Naive thymus-derived CD4-positive, alpha-beta T cell (primary cell): ENCODE measurements at regions of chr7 and their contacts with region 1.

Region 1: DNA sequence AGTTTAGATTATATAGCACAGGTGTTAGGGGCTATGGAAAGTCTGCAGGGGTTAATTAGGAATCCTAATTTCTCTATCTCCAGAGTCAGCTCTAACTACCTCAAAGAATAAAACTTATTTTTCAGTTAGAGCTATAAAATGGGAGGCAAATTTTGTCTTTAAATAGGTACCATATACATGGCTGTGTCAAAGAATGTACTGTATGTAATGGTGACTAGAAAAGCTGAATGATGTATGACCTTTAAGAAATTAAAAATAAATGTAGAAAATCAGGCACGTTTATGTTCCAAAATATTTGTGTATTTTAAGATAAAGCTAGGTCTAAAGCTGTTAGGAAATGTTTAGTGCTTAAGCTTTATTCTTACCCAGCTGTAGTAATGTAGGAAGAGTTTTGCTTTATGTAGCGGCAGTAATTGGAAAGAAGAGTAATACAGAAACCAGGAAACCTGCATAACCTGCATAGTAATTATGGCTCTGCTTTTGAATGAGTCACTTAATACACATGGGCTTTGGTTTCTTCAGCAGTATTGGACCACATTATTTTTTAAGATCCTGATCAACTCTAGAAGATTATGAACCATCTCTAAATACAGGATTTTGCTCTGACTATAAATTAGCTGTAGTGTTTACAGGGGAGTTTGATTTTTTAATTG is 85.0 kb downstream of the KMT2E start:
- DNase-seq: no peak
- ATAC-seq: no peak
- H3K4me3 ChIP-seq: no peak overlapping the region
- H3K4me3 Mint-ChIP-seq: peak overlapping the region in 1 of 10 donors; percentile 7
- H3K27ac ChIP-seq: no peak overlapping the region
- H3K27ac Mint-ChIP-seq: peak overlapping the region in 8 of 9 donors; percentile 37 to 87 (median 73)
- H3K4me1 ChIP-seq: peaks cover 0 to 3% of the 10 kb centered on the region in 2 donors
- H3K4me1 Mint-ChIP-seq: peaks cover 5 to 56% (median 39%) of the 10 kb centered on the region in 7 donors
- H3K27me3 ChIP-seq: no peaks in the 10 kb centered on the region
- H3K27me3 Mint-ChIP-seq: no peaks in the 10 kb centered on the region

Region 2: DNA sequence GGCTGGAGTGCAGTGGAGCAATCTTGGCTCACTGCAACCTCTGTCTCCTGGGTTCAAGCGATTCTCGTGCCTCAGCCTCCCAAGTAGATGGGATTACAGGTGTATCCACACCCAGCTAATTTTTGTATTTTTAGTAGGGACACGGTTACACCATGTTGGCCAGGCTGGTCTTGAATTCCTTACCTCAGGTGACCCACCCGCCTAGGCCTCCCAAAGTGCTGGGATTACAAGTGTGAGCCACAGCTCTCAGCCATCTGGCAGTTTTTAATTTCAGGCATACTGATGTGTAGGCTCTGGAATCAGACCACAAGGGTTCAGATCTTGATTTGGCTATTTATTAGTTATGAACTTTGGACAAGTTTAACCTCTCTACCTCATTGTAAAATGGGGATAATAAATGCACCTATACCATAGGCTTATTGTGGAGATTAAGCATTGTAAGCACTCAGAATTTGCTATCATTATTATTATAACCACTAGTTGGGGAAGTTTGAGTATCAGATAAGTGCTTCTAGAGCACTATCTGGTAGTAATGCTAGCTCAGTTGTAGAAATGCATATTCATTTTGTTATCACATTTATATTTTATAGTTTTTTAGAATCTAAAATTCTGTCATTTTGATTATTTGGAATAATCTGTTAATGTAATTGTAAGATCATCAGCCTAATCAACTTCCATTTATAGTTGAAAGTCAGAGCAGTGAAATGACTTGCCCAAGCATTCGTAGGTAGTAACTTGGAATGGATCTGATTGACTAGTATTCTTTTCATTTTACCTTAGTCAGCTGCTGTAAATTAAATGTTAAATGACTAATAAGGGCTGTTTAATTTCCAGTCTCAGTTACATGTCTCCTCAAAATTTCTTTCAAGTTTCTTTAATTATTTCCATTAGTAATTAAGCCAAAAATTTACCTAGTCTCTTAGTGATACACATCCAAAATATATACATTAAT is 62.5 kb before region 1 on chr7:
- CTCF ChIA-PET with region 1: no interaction called
- POLR2A ChIA-PET with region 1: no interaction called
- intact Hi-C with region 1: no loop called
- DNase-seq: no peak
- ATAC-seq: peak; percentile 19
- H3K4me3 ChIP-seq: no peak overlapping the region
- H3K4me3 Mint-ChIP-seq: peak overlapping the region in 8 of 10 donors; percentile 6 to 74 (median 44)
- H3K27ac ChIP-seq: no peak overlapping the region
- H3K27ac Mint-ChIP-seq: peak overlapping the region in 7 of 9 donors; percentile 18 to 70 (median 41)
- H3K4me1 ChIP-seq: peaks cover 31 to 35% of the 10 kb centered on the region in 2 donors
- H3K4me1 Mint-ChIP-seq: peaks cover 29 to 77% (median 63%) of the 10 kb centered on the region in 7 donors
- H3K27me3 ChIP-seq: no peaks in the 10 kb centered on the region
- H3K27me3 Mint-ChIP-seq: no peaks in the 10 kb centered on the region

Region 3: GRCh38 chr7:105084581-105084980 is 14.4 kb before region 1 on chr7:
- CTCF ChIA-PET with region 1: no interaction called
- POLR2A ChIA-PET with region 1: no interaction called
- intact Hi-C with region 1: loop called in 1 of 2 experiments (anchors 2 kb)
- DNase-seq: no peak
- ATAC-seq: no peak
- H3K4me3 ChIP-seq: no peak overlapping the region
- H3K4me3 Mint-ChIP-seq: no peak overlapping the region
- H3K27ac ChIP-seq: no peak overlapping the region
- H3K27ac Mint-ChIP-seq: peak overlapping the region in 3 of 9 donors; percentile 42 to 52 (median 46)
- H3K4me1 ChIP-seq: no peaks in the 10 kb centered on the region
- H3K4me1 Mint-ChIP-seq: peaks cover 5 to 29% (median 20%) of the 10 kb centered on the region in 7 donors
- H3K27me3 ChIP-seq: no peaks in the 10 kb centered on the region
- H3K27me3 Mint-ChIP-seq: no peaks in the 10 kb centered on the region

Region 4: GRCh38 chr7:105118612-105119600 is 19.9 kb after region 1 on chr7:
- CTCF ChIA-PET with region 1: no interaction called
- POLR2A ChIA-PET with region 1: interaction called, 3 read pairs
- intact Hi-C with region 1: loop called in 1 of 2 experiments (anchors 2 kb)
- DNase-seq: no peak
- ATAC-seq: no peak
- H3K4me3 ChIP-seq: no peak overlapping the region
- H3K4me3 Mint-ChIP-seq: peak overlapping the region in 4 of 10 donors; percentile 23 to 39 (median 34)
- H3K27ac ChIP-seq: peak overlapping the region; percentile 40
- H3K27ac Mint-ChIP-seq: peak overlapping the region; percentile 53 to 90 (median 86)
- H3K4me1 ChIP-seq: no peaks in the 10 kb centered on the region
- H3K4me1 Mint-ChIP-seq: peaks cover 5 to 51% (median 32%) of the 10 kb centered on the region in 7 donors
- H3K27me3 ChIP-seq: no peaks in the 10 kb centered on the region
- H3K27me3 Mint-ChIP-seq: no peaks in the 10 kb centered on the region

Region 5: DNA sequence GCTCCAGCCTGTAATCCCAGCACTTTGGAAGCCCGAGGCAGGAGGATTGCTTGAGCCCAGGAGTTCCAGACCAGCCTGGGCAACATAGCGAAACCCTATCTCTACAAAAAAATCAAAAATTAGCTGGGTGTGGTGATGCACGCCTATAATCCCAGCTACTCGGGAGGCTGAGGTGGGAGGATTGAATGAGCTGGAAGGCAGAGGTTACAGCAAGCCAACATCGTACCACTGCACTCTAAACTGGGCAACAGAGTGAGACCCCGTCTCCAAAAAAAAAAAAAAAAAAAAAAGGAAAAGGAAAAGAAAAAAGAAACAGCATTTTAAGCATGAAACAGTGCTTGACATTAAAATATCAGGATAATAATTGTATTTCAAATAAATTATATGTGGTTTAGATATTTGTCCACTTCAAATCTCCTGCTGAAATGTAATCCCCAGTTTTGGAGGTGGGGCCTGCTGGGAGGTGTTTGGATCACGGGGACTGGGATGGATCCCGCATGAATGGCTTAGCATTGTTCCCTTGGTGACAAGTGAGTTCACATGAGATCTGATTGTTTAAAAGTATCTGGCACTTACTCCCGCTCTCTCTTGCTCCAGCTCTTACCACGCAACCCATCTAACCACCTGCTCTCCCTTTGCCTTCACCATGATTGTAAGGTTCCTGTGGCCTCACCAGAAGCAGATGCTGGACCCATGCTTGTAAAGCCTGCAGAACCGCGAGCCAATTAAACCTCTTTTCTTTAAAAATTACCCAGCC is 186.3 kb after region 1 on chr7:
- CTCF ChIA-PET with region 1: no interaction called
- POLR2A ChIA-PET with region 1: no interaction called
- intact Hi-C with region 1: no loop called
- DNase-seq: no peak
- ATAC-seq: no peak
- H3K4me3 ChIP-seq: no peak overlapping the region
- H3K4me3 Mint-ChIP-seq: no peak overlapping the region
- H3K27ac ChIP-seq: no peak overlapping the region
- H3K27ac Mint-ChIP-seq: no peak overlapping the region
- H3K4me1 ChIP-seq: no peaks in the 10 kb centered on the region
- H3K4me1 Mint-ChIP-seq: peaks cover 14 to 67% (median 54%) of the 10 kb centered on the region in 7 donors
- H3K27me3 ChIP-seq: no peaks in the 10 kb centered on the region
- H3K27me3 Mint-ChIP-seq: no peaks in the 10 kb centered on the region

Region 6: DNA sequence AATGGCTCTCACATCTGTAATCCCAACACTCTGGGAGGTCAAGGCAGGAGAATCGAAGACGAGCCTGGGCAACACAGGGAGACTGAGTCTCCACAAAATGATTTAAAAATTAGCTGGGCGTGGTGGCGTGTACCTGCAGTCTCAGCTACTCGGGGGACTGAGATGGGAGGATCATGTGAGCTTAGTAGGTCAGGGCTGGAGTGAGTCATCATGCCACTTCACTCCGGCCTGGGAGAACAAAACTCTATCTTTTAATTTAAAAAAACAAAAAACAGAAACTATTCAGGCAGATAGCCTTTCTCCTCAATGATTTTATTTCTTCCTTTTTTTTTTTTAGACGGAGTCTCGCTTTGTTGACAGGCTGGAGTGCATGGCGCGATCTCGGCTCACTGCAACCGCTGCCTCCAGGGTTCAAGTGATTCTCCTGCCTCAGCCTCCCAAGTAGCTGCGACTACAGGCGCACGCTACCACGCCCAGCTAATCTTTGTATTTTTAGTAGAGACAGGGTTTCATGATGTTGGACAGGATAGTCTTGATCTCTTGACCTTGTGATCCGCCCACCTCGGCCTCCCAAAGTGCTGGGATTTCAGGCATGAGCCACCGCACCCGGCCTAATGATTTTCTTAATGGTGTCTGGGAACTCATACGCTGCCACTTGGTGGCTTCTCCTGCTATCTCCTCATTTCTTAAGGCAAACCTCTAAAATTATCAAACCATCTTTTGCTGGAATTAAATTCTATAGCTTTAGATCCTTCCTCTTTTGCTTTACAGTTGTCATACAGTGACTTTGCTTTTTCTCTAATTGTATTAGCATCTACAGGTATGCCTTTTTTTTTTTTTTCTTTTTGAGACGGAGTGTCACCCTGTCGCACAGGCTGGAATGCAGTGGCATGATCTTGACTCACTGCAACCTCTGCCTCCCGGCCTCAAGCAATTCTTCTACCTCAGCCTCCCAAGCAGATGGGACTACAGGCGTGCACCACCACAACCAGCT is 266.8 kb after region 1 on chr7:
- CTCF ChIA-PET with region 1: no interaction called
- POLR2A ChIA-PET with region 1: no interaction called
- intact Hi-C with region 1: no loop called
- DNase-seq: no peak
- ATAC-seq: no peak
- H3K4me3 ChIP-seq: no peak overlapping the region
- H3K4me3 Mint-ChIP-seq: peak overlapping the region in 1 of 10 donors; percentile 26
- H3K27ac ChIP-seq: no peak overlapping the region
- H3K27ac Mint-ChIP-seq: peak overlapping the region in 3 of 9 donors; percentile 34 to 54 (median 46)
- H3K4me1 ChIP-seq: peaks cover 10 to 11% of the 10 kb centered on the region in 2 donors
- H3K4me1 Mint-ChIP-seq: peaks cover 14 to 65% (median 49%) of the 10 kb centered on the region in 7 donors
- H3K27me3 ChIP-seq: no peaks in the 10 kb centered on the region
- H3K27me3 Mint-ChIP-seq: no peaks in the 10 kb centered on the region

Region 7: DNA sequence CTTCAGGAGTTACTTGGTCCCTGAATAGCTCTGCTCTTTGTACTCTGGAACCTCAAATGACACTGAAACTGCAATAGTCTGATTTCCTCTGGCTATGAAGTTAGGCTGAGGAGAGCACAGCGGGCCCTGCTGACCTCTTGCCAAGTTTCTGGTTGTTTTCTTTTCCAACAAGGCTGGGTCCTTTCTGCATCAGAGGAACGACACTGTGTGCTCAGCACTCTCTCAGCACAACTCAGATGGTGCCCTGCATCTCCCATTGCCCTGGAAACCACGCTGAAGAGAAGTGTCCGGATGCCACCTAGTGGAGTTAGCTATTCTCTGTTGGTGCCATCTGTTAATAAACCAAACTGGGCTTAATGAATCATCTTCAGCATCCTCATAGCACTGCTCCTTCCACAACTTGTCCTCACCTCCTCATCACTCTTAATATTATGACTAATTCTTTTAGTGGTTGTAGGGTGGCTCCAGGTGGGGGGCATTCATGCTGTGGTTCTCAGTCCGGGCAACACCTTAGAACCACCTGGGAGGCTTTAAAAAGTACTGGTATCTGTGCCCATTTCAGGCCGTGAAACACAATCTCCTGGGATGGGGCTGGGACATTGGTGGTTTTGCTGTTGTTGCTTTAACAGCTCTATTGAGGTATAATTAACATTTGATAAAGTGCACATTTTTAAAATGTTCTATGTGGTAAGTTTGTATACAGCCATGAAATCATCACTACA is 490.5 kb after region 1 on chr7:
- CTCF ChIA-PET with region 1: no interaction called
- POLR2A ChIA-PET with region 1: no interaction called
- intact Hi-C with region 1: loop called in 1 of 2 experiments (anchors 10 kb)
- DNase-seq: peak in 8 of 9 donors; percentile 16 to 61 (median 42)
- ATAC-seq: peak; percentile 87
- H3K4me3 ChIP-seq: no peak overlapping the region
- H3K4me3 Mint-ChIP-seq: no peak overlapping the region
- H3K27ac ChIP-seq: no peak overlapping the region
- H3K27ac Mint-ChIP-seq: peak overlapping the region in 3 of 9 donors; percentile 4 to 70 (median 69)
- H3K4me1 ChIP-seq: no peaks in the 10 kb centered on the region
- H3K4me1 Mint-ChIP-seq: peaks cover 0 to 17% (median 4%) of the 10 kb centered on the region in 7 donors
- H3K27me3 ChIP-seq: no peaks in the 10 kb centered on the region
- H3K27me3 Mint-ChIP-seq: peaks cover 0 to 9% (median 0%) of the 10 kb centered on the region in 5 donors

Region 8: GRCh38 chr7:106080300-106080987 is 981.5 kb after region 1 on chr7:
- CTCF ChIA-PET with region 1: no interaction called
- POLR2A ChIA-PET with region 1: no interaction called
- intact Hi-C with region 1: no loop called
- DNase-seq: no peak
- ATAC-seq: no peak
- H3K4me3 ChIP-seq: no peak overlapping the region
- H3K4me3 Mint-ChIP-seq: no peak overlapping the region
- H3K27ac ChIP-seq: no peak overlapping the region
- H3K27ac Mint-ChIP-seq: peak overlapping the region in 2 of 9 donors; percentile 46 to 52
- H3K4me1 ChIP-seq: peaks cover 3 to 5% of the 10 kb centered on the region in 2 donors
- H3K4me1 Mint-ChIP-seq: peaks cover 2 to 49% (median 38%) of the 10 kb centered on the region in 7 donors
- H3K27me3 ChIP-seq: no peaks in the 10 kb centered on the region
- H3K27me3 Mint-ChIP-seq: peaks cover 0 to 3% (median 0%) of the 10 kb centered on the region in 5 donors